Ovary (tissue), 10 donors: ENCODE measurements at regions of chr6 and their contacts with region 1.

Region 1: GRCh38 chr6:77906070-77906469 is 253.2 kb downstream of the MEI4 start:
- DNase-seq: no peak
- H3K4me3 ChIP-seq: no peak overlapping the region
- H3K27ac ChIP-seq: no peak overlapping the region
- H3K4me1 ChIP-seq: no peaks in the 10 kb centered on the region
- H3K27me3 ChIP-seq: no peaks in the 10 kb centered on the region
- CTCF ChIP-seq: no peak
- EP300 ChIP-seq: no peak
- POLR2A ChIP-seq: no peak

Region 2: GRCh38 chr6:77893391-77893790 is 12.7 kb before region 1 on chr6:
- intact Hi-C with region 1: loop called in 1 of 4 experiments (anchors 1 kb)
- DNase-seq: no peak
- H3K4me3 ChIP-seq: no peak overlapping the region
- H3K27ac ChIP-seq: no peak overlapping the region
- H3K4me1 ChIP-seq: no peaks in the 10 kb centered on the region
- H3K27me3 ChIP-seq: no peaks in the 10 kb centered on the region
- CTCF ChIP-seq: no peak
- EP300 ChIP-seq: no peak
- POLR2A ChIP-seq: no peak